ENCODE measurements at regions of chr11 and their contacts with region 1.

Region 1: DNA sequence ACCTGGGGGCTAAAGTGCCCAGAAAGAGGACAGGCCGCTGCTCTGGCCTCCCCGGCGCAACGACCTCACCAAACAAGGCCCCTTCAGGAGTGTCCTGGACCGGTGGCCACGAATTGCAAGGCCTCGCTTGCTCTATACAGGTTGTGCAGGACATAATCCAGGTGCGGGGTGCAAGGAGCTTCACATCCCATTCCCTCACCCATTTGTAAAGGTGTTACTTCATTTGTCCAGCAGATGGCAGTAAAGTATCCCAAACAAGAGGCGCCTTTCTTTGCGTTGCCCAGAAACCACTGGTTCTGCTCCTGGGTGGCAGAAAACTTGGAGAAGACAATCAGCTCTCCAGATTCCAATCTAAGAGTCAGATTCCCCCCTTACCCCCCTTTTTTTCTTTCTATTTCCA is 35.9 kb upstream of the PRDM11 start:
- DNase-seq: no peak
- H3K4me3 Mint-ChIP-seq: no peak overlapping the region
- H3K27ac Mint-ChIP-seq: no peak overlapping the region
- H3K4me1 Mint-ChIP-seq: no peaks in the 10 kb centered on the region
- H3K27me3 Mint-ChIP-seq: peaks cover 25% of the 10 kb centered on the region

Region 2: GRCh38 chr11:45289369-45289768 is 178.8 kb after region 1 on chr11:
- intact Hi-C with region 1: loop called (anchors 1 kb)
- DNase-seq: no peak
- H3K4me3 Mint-ChIP-seq: no peak overlapping the region
- H3K27ac Mint-ChIP-seq: no peak overlapping the region
- H3K4me1 Mint-ChIP-seq: no peaks in the 10 kb centered on the region
- H3K27me3 Mint-ChIP-seq: peaks cover 62% of the 10 kb centered on the region

Region 3: GRCh38 chr11:45332276-45332934 is 221.8 kb after region 1 on chr11:
- intact Hi-C with region 1: loop called (anchors 1 kb)
- DNase-seq: no peak
- H3K4me3 Mint-ChIP-seq: no peak overlapping the region
- H3K27ac Mint-ChIP-seq: no peak overlapping the region
- H3K4me1 Mint-ChIP-seq: no peaks in the 10 kb centered on the region
- H3K27me3 Mint-ChIP-seq: peaks cover 8% of the 10 kb centered on the region

Measured in activated T-helper 2 cell treated with anti-CD3 and anti-CD28 coated beads, Interferon-gamma antibody, Interleukin-2, Interleukin-4, amounts not matched to agents 10 μg/mL and 5 μg/mL and 100 μg/mL, durations not matched to agents 14 hours and 24 hours and 36 hours (primary cell).